ENCODE measurements at regions of chr11 and their contacts with region 1.

Region 1: GRCh38 chr11:82733444-82734119 is at the start of gene FAM181B:
- DNase-seq: peak; percentile 60 to 92 (median 83)

Region 2: GRCh38 chr11:82796998-82797964 is 63.7 kb after region 1 on chr11:
- intact Hi-C with region 1: loop called (anchors 5 kb)
- DNase-seq: peak in 41 of 42 donors; percentile 38 to 88 (median 63)

Region 3: DNA sequence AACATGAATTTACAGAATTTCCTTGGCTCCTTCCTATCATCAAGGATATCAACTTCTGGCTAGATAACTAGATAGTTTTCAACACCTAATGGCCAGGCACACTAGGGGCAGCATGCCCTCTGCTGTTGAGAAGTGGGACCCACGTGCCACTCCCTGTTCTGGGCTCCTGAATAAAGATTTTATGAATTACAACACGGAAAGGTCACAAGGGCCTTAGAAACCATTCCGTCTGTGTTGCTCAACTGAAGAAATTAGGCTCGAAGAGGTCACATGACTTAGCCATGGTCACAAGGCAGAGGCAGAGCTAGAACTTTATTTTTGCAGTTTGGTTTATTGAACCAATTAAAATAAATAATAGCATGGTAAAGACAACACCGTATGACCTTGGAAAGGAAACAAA is 130.7 kb after region 1 on chr11:
- intact Hi-C with region 1: loop called (anchors 5 kb)
- DNase-seq: peak; percentile 56 to 92 (median 82)

Region 4: DNA sequence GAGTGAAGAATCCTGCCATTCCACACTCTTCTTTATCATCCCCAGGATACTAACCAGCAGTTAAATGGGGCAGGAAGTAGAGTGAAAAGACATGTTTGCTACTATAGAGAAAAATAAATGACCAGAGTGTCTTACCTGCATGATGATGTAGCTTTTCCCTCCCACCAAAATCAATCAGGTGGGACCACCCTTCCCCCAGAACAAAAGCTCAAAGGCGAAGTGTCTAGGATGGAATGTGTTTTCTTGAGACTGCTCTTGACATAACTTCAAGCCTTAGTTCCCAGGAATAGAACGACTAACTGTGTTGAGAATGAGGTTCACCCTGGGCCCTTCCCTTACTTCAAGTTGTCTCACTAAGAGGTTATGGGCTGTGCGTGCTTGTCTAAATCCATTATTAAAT is 891.8 kb after region 1 on chr11:
- intact Hi-C with region 1: no loop called
- DNase-seq: no peak